ENCODE measurements at regions of chr15 and their contacts with region 1.

Region 1: DNA sequence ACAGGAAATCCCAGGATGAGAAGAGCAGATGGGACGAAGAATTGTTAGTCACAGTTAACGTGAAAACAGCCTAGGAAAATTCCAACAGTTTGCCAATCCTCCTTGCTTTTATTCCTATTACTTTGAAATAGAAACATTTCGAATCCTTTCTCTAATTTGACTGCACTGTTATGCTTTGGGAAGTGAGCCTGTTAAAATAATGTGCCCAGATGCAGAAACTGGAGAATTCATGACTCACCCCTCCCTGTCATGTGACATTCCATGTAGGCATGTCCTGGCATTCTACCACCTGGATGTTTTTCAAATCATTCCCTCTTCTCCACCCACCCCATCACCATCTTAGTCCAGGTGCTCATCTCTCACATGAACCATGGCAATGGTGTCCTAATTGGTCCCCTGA is 107.3 kb downstream of the MINAR1 start:
- DNase-seq: no peak
- H3K4me3 ChIP-seq: no peak overlapping the region
- H3K27ac ChIP-seq: no peak overlapping the region
- H3K4me1 ChIP-seq: no peaks in the 10 kb centered on the region
- H3K27me3 ChIP-seq: no peaks in the 10 kb centered on the region
- CTCF ChIP-seq: no peak

Region 2: DNA sequence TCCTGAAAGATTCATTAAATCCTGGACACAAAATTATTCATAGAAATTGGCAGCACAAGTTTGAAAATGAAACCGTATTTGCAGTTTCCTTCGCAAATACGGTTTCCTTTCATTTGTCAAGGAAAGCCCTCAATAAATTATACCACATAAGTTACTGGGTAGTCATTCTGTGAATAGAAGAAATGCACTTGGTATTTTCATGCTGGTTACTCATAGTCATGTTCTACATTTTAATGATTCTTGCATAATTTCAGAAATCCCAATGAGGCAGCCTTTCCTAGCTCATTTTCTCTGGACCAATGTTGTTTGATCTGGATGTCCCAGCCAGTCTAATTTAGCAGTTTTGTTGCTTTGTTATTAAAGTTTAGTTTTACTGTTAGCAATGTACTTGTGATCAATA is 64.1 kb before region 1 on chr15:
- CTCF ChIA-PET with region 1: no interaction called
- POLR2A ChIA-PET with region 1: no interaction called
- intact Hi-C with region 1: loop called (anchors 10 kb)
- DNase-seq: no peak
- H3K4me3 ChIP-seq: no peak overlapping the region
- H3K27ac ChIP-seq: no peak overlapping the region
- H3K4me1 ChIP-seq: no peaks in the 10 kb centered on the region
- H3K27me3 ChIP-seq: no peaks in the 10 kb centered on the region
- CTCF ChIP-seq: no peak

Region 3: DNA sequence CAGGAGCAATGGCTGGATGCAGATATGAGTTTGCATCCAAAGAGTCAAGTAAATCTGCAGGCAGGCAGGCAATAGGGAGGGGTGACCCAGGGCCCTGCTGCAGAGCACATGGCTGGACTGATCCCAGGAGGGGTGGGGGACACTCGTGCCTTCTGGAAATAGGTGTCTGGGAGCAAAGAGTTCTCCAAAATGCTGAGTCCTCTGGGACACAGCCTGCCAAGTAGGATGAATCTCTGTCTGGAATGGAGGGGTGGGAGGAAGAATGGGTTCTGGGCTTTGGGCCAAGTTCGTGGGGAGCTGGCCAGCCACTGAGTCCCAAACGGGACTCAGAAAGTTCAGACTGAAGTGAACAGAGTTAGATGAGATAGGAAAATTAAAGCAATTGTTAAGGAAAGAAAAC is 142.9 kb after region 1 on chr15:
- CTCF ChIA-PET with region 1: no interaction called
- POLR2A ChIA-PET with region 1: no interaction called
- intact Hi-C with region 1: no loop called
- DNase-seq: peak; percentile 18
- H3K4me3 ChIP-seq: no peak overlapping the region
- H3K27ac ChIP-seq: no peak overlapping the region
- H3K4me1 ChIP-seq: no peaks in the 10 kb centered on the region
- H3K27me3 ChIP-seq: no peaks in the 10 kb centered on the region
- CTCF ChIP-seq: no peak

Measured in A673 (cell line).